WTC11 (cell line): ENCODE measurements at regions of chr17 and their contacts with region 1.

Region 1: DNA sequence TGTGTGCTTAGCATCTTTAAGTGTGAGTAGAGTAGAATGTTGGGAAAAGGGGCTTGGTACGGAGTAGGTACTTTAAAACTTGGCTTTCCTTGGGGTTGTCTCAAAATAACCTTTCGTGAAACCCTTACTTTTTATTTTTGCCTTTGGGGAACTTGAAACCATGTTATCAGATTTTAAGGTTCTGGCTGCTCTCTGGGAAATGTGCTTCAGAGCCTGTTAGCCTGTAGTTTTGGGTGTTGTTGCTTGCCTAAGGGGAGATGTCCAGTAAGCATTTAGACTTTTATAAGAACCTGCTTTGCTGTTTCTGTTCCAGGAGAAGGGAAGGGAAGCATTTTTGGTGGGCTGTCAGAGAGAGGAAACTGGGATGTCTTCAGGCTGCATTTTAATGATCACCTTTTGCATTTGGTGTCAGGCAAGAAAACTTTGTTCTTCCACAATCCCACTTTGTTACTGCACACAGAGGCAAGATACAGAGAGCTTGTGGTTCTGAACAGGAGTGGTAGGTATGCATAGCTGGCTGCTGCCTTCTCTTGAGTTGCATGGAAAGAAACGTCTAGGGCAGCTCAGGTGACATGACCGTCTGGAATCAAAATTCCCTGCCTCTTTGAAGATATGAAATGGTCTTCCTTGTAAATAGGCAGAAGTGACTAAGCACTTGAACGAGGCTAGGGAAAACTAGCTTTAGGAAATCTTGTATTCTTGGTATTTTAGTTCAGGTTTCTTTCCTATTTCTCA is 1.7 kb downstream of the RABEP1 start:
- DNase-seq: no peak
- ATAC-seq: no peak
- H3K4me3 Mint-ChIP-seq: peak overlapping the region; percentile 81
- H3K27ac Mint-ChIP-seq: peak overlapping the region; percentile 76
- H3K4me1 Mint-ChIP-seq: peaks cover 46% of the 10 kb centered on the region
- H3K27me3 Mint-ChIP-seq: peaks cover 5% of the 10 kb centered on the region; the same call in 1 of the 2 replicates
- CTCF ChIP-seq: no peak

Region 2: GRCh38 chr17:5304636-5305035 is 20.9 kb after region 1 on chr17:
- CTCF ChIA-PET with region 1: interaction called, 10 read pairs
- POLR2A ChIA-PET with region 1: no interaction called
- DNase-seq: no peak
- ATAC-seq: no peak
- H3K4me3 Mint-ChIP-seq: no peak overlapping the region
- H3K27ac Mint-ChIP-seq: no peak overlapping the region
- H3K4me1 Mint-ChIP-seq: peaks cover 9% of the 10 kb centered on the region
- H3K27me3 Mint-ChIP-seq: no peaks in the 10 kb centered on the region
- CTCF ChIP-seq: no peak